Left lung (tissue), 14 donors: ENCODE measurements at regions of chr17 and their contacts with region 1.

Region 1: DNA sequence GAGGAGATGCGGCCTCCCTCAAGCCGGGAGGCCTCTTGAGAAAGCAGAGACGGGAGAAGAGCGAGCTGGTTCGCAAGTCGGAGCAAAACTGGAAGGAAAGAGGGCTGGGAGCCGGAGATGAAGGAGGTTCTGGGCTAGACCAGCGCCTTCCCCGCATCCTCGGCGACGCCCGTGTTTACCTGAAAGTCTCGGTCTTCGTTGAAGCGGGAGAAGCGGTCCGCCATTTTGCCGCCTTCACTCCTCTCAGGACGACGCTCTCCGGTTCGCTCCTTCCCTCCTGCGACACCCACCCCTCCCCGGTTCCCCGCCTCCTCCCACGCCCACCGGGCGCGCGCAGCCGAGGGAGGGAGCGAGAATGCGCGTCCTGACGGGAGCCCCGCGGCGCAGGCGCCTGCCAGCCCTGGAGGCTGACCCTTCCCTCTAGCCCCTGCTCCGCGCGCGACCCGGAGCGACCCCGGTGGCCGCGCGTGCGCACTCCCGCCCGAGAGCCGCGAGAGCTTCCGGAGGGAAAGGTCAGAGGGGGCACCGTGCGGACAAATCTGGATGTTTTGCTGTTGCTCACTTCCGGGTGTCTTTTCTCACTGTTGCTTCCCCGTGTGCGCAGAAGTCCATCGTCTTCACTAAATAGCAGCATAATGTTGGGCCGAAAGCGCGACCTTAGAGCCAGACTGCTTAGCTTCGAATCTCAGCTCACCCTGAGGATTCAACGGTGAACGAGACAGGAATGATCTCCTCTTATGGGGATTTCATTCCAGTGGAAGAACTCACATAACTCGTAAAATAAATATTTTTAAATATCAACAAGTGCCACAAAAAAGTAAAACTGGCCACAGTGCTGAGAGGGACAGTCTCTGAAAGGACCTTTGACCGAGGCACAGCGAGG is at the start of gene GPATCH8:
- DNase-seq: peak; percentile 93 to 98 (median 97)
- ATAC-seq: peak; percentile 99
- H3K4me3 ChIP-seq: peak within 1 kb of the TSS; percentile 93 to 95
- H3K27ac ChIP-seq: peak within 1 kb of the TSS; percentile 88 to 94
- H3K4me1 ChIP-seq: peaks cover 11 to 46% of the 10 kb centered on the region in 2 donors
- H3K27me3 ChIP-seq: peaks cover 0 to 5% of the 10 kb centered on the region in 2 donors
- CTCF ChIP-seq: no peak
- polyA plus RNA-seq, gene GPATCH8: 51.8 to 57.5 (median 54.5) TPM

Region 2: DNA sequence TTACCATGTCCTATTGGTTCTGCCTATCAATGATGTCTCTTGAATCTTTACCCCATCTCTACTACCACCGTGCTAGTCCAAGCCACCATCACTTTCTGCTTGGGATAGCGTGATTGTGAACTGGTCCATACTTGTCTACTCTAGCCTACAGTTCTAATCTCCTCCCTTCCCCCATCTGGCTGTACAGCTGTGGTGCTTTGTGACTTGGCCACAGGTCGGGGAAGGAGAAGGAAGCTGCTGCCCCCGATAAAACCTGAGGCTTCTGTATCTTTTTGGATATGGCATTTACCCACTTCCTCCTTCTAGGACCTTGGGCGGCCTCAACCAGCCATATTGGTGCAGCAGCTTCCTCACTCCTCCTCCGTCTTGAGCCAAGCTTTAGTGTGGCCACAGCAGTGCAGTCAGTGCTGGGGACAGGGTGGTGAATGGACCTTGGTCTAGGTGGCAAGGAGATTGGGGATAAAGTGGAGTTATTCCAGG is 113.6 kb before region 1 on chr17:
- intact Hi-C with region 1: loop called in 1 of 2 experiments (anchors 10 kb)
- DNase-seq: no peak
- ATAC-seq: no peak
- H3K4me3 ChIP-seq: no peak overlapping the region
- H3K27ac ChIP-seq: no peak overlapping the region
- H3K4me1 ChIP-seq: peaks cover 10 to 14% of the 10 kb centered on the region in 2 donors
- H3K27me3 ChIP-seq: peaks cover 0 to 23% of the 10 kb centered on the region in 2 donors
- CTCF ChIP-seq: no peak

Region 3: DNA sequence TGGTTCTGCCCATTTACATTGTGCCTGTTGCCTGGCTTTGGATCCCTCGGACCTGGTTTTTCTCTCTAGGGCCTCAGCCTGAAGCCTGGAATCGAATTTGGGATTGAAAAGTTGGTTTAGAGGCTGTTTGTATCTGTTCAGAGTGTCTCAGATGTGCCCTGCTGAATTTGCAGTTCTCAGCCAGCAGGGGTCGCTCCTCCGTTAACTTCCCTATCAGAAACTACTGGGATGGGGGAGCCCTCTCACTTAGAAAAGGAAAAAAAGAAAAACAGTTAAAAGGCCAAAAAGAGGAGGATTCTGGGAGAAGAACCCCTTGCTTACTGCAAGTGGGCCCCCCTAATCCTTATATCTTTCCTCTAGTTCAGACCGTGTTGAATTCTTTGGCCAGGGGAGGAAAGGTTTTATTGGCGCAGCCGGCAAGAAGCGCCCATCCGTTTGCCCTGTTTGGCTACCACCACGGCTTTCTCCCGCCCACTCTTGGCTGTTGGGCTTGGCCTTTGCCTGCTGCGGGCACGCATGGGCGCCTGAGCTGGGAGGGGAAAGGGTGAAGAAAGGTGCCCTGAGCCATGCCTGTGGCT is 62.6 kb after region 1 on chr17:
- intact Hi-C with region 1: no loop called
- DNase-seq: no peak
- ATAC-seq: no peak
- H3K4me3 ChIP-seq: no peak overlapping the region
- H3K27ac ChIP-seq: no peak overlapping the region
- H3K4me1 ChIP-seq: no peaks in the 10 kb centered on the region
- H3K27me3 ChIP-seq: peaks cover 0 to 49% of the 10 kb centered on the region in 2 donors
- CTCF ChIP-seq: no peak

Region 4: GRCh38 chr17:44672479-44673093 is 169.2 kb after region 1 on chr17:
- intact Hi-C with region 1: no loop called
- DNase-seq: no peak
- ATAC-seq: no peak
- H3K4me3 ChIP-seq: no peak overlapping the region
- H3K27ac ChIP-seq: no peak overlapping the region
- H3K4me1 ChIP-seq: no peaks in the 10 kb centered on the region
- H3K27me3 ChIP-seq: no peaks in the 10 kb centered on the region
- CTCF ChIP-seq: peak; percentile 29 to 32